ENCODE measurements at regions of chr10 and their contacts with region 1.

Region 1: GRCh38 chr10:13299437-13300287 is at the start of gene PHYH:
- DNase-seq: peak; percentile 94 to 97 (median 95)
- H3K4me3 ChIP-seq: peak within 1 kb of the TSS; percentile 33 to 88 (median 70)
- H3K27ac ChIP-seq: peak within 1 kb of the TSS; percentile 96 to 99 (median 99)
- H3K4me1 ChIP-seq: peaks cover 10 to 18% of the 10 kb centered on the region in 2 donors
- H3K27me3 ChIP-seq: no peaks in the 10 kb centered on the region
- CTCF ChIP-seq: no peak
- POLR2A ChIP-seq: peak; percentile 77 to 94
- total RNA-seq, gene PHYH: 62.2 to 138 (median 73.0) TPM

Region 2: DNA sequence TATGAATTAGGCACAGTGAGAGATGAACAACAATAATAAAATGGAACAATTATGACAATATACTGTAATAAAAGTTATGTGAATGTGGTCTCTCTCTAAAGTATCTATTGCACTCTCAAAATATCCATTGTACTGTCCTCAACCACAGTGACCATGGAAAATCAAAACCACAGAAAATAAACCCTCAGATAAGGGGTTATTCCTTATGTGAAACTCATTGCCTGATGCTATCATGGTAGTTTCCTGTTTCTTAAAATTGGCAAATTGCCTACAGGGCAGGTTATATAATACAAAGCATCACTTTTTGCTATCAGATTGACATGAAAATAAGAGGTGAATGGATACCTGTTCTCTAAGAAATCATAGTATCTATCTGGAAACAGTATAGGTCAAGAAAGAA is 134.5 kb before region 1 on chr10:
- intact Hi-C with region 1: loop called in 1 of 2 experiments (anchors 5 kb)
- DNase-seq: no peak
- H3K4me3 ChIP-seq: no peak overlapping the region
- H3K27ac ChIP-seq: no peak overlapping the region
- H3K4me1 ChIP-seq: peaks cover 2 to 12% of the 10 kb centered on the region in 2 donors
- H3K27me3 ChIP-seq: no peaks in the 10 kb centered on the region
- CTCF ChIP-seq: no peak
- POLR2A ChIP-seq: no peak

Region 3: GRCh38 chr10:13206546-13207443 is 92.9 kb before region 1 on chr10:
- intact Hi-C with region 1: loop called (anchors 10 kb)
- DNase-seq: peak in 3 of 7 donors; percentile 25 to 39 (median 26)
- H3K4me3 ChIP-seq: no peak overlapping the region
- H3K27ac ChIP-seq: no peak overlapping the region
- H3K4me1 ChIP-seq: no peaks in the 10 kb centered on the region
- H3K27me3 ChIP-seq: no peaks in the 10 kb centered on the region
- CTCF ChIP-seq: peak; percentile 13 to 56 (median 38)
- POLR2A ChIP-seq: no peak